ENCODE measurements at regions of chr11 and their contacts with region 1.

Region 1: GRCh38 chr11:128039140-128040021 is 548.0 kb downstream of the ETS1 start:
- DNase-seq: peak; percentile 95
- ATAC-seq: peak; percentile 91
- H3K4me3 Mint-ChIP-seq: peak overlapping the region; percentile 71
- H3K27ac Mint-ChIP-seq: peak overlapping the region; percentile 96
- H3K4me1 Mint-ChIP-seq: peaks cover 40% of the 10 kb centered on the region
- H3K27me3 Mint-ChIP-seq: no peaks in the 10 kb centered on the region

Region 2: GRCh38 chr11:128052912-128053641 is 13.7 kb after region 1 on chr11:
- CTCF ChIA-PET with region 1: interaction called, 32 read pairs
- DNase-seq: no peak
- ATAC-seq: peak; percentile 68
- H3K4me3 Mint-ChIP-seq: peak overlapping the region; percentile 49
- H3K27ac Mint-ChIP-seq: peak overlapping the region; percentile 87
- H3K4me1 Mint-ChIP-seq: peaks cover 58% of the 10 kb centered on the region
- H3K27me3 Mint-ChIP-seq: no peaks in the 10 kb centered on the region

Region 3: GRCh38 chr11:128146926-128147605 is 107.7 kb after region 1 on chr11:
- CTCF ChIA-PET with region 1: interaction called, 15 read pairs
- DNase-seq: no peak
- ATAC-seq: no peak
- H3K4me3 Mint-ChIP-seq: no peak overlapping the region
- H3K27ac Mint-ChIP-seq: no peak overlapping the region
- H3K4me1 Mint-ChIP-seq: no peaks in the 10 kb centered on the region
- H3K27me3 Mint-ChIP-seq: no peaks in the 10 kb centered on the region

Region 4: GRCh38 chr11:128474036-128474874 is 434.9 kb after region 1 on chr11:
- CTCF ChIA-PET with region 1: no interaction called
- DNase-seq: no peak
- ATAC-seq: no peak
- H3K4me3 Mint-ChIP-seq: peak overlapping the region; percentile 59
- H3K27ac Mint-ChIP-seq: peak overlapping the region; percentile 95
- H3K4me1 Mint-ChIP-seq: peaks cover 94% of the 10 kb centered on the region
- H3K27me3 Mint-ChIP-seq: no peaks in the 10 kb centered on the region

Measured in activated CD8-positive, alpha-beta memory T cell treated with anti-CD3 and anti-CD28 coated beads, Interleukin-2, amount 10 ng/mL, durations not matched to agents 7 days and 5 days (primary cell).